H1 (cell line): ENCODE measurements at regions of chr5 and their contacts with region 1.

Region 1: GRCh38 chr5:131589510-131590348 is 45.3 kb downstream of the RAPGEF6 start:
- DNase-seq: peak in 1 of 2 experiments; percentile 56
- H3K4me3 ChIP-seq: no peak overlapping the region
- H3K27ac ChIP-seq: no peak overlapping the region
- H3K4me1 ChIP-seq: no peaks in the 10 kb centered on the region; a peak in 1 of 7 replicates
- H3K27me3 ChIP-seq: no peaks in the 10 kb centered on the region
- CTCF ChIP-seq: peak in 2 of 3 experiments; percentile 63 to 88; a peak in 3 of 4 replicates
- EP300 ChIP-seq: no peak
- POLR2A ChIP-seq: no peak
- RAD21 ChIP-seq: peak; percentile 90 to 91

Region 2: GRCh38 chr5:131548176-131548575 is 41.6 kb before region 1 on chr5:
- CTCF ChIA-PET with region 1: no interaction called
- POLR2A ChIA-PET with region 1: no interaction called
- DNase-seq: no peak
- H3K4me3 ChIP-seq: no peak overlapping the region
- H3K27ac ChIP-seq: no peak overlapping the region
- H3K4me1 ChIP-seq: no peaks in the 10 kb centered on the region
- H3K27me3 ChIP-seq: no peaks in the 10 kb centered on the region
- CTCF ChIP-seq: no peak
- EP300 ChIP-seq: no peak
- POLR2A ChIP-seq: no peak
- RAD21 ChIP-seq: no peak

Region 3: GRCh38 chr5:131634666-131634995 is 44.9 kb after region 1 on chr5:
- CTCF ChIA-PET with region 1: interaction called, 17 read pairs
- POLR2A ChIA-PET with region 1: interaction called, 4 read pairs
- DNase-seq: peak; percentile 46 to 75
- H3K4me3 ChIP-seq: peak overlapping the region; percentile 89 to 99 (median 96)
- H3K27ac ChIP-seq: peak overlapping the region; percentile 93
- H3K4me1 ChIP-seq: peaks cover 0 to 2% (median 0%) of the 10 kb centered on the region in 4 experiments; a peak in 1 of 7 replicates
- H3K27me3 ChIP-seq: no peaks in the 10 kb centered on the region
- CTCF ChIP-seq: no peak
- EP300 ChIP-seq: no peak
- POLR2A ChIP-seq: no peak
- RAD21 ChIP-seq: no peak; a peak in 1 of 4 replicates

Region 4: DNA sequence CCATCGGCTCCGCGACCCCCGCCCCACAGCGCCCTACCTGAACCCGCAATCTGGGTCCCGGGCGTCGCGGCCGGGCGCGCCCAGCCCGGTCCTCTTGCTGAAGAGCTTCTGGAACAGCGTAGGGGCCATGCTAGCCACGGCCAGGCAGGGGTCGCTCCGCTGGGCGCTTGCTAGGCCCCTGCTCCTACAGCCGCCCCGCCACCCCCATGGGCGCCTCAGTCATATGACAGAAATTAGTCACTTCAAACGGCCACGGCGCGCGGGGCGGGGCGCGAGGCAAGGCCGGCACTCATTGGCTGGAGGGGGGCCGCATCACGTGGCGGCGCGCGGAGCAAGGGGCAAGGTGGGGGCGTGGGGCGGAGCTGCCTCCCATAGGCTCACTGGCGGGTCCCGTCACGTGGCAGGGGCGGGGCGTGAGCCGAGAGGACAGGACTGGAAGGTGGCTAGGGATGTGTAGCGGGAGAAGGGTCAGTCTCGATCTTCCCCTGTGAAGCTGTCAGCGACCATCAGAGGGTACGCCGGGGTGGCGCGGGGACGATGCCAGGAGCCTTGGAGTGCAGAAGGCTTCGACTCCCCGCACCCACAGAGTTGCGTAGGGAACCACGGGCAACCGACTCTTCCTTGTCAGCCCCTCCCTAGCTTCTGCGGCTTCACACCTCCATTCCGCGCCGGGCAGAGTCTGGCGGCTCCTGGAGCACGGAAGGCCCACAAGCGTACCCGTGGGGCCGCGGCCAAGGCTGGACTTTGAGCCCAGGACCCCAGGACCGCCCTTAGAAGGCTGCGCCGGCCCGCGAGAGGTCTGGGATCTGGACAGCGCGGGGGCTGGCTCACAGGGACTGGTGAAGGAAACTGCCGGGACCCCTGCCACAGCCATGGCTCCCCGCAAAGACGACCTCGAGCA is 207.3 kb after region 1 on chr5 and contains the start of gene FNIP1:
- CTCF ChIA-PET with region 1: interaction called, 10 read pairs
- POLR2A ChIA-PET with region 1: interaction called, 3 read pairs
- DNase-seq: peak; percentile 88 to 98
- H3K4me3 ChIP-seq: peak within 1 kb of the TSS; percentile 76 to 96 (median 89)
- H3K27ac ChIP-seq: peak within 1 kb of the TSS; percentile 68; the same call in 1 of the 2 replicates
- H3K4me1 ChIP-seq: 0 out of 7 replicates have a peak, but pooled peaks cover 0 to 1% (median 0%) of the 10 kb centered on the region in 4 experiments
- H3K27me3 ChIP-seq: peaks cover 0 to 3% (median 0%) of the 10 kb centered on the region in 4 experiments; a peak in 1 of 7 replicates
- CTCF ChIP-seq: peak in 1 of 3 experiments; percentile 10; a peak in 1 of 4 replicates
- EP300 ChIP-seq: peak in 1 of 2 experiments; percentile 39; a peak in 1 of 3 replicates
- POLR2A ChIP-seq: peak; percentile 72 to 78
- RAD21 ChIP-seq: peak in 1 of 2 experiments; percentile 3; a peak in 1 of 4 replicates
- total RNA-seq, gene FNIP1: 17.1 and 17.3 TPM in 2 replicates

Region 5: GRCh38 chr5:131913603-131914002 is 323.9 kb after region 1 on chr5:
- CTCF ChIA-PET with region 1: no interaction called
- POLR2A ChIA-PET with region 1: no interaction called
- DNase-seq: no peak
- H3K4me3 ChIP-seq: no peak overlapping the region
- H3K27ac ChIP-seq: no peak overlapping the region
- H3K4me1 ChIP-seq: no peaks in the 10 kb centered on the region
- H3K27me3 ChIP-seq: no peaks in the 10 kb centered on the region
- CTCF ChIP-seq: no peak
- EP300 ChIP-seq: no peak
- POLR2A ChIP-seq: no peak
- RAD21 ChIP-seq: no peak

Region 6: GRCh38 chr5:132007399-132008165 is 417.9 kb after region 1 on chr5:
- CTCF ChIA-PET with region 1: interaction called, 82 read pairs
- POLR2A ChIA-PET with region 1: no interaction called
- DNase-seq: peak; percentile 73 to 89
- H3K4me3 ChIP-seq: no peak overlapping the region
- H3K27ac ChIP-seq: no peak overlapping the region
- H3K4me1 ChIP-seq: peaks cover 3 to 29% (median 17%) of the 10 kb centered on the region in 4 experiments
- H3K27me3 ChIP-seq: peaks cover 5 to 26% (median 18%) of the 10 kb centered on the region in 4 experiments
- CTCF ChIP-seq: peak; percentile 45 to 98 (median 86)
- EP300 ChIP-seq: no peak
- POLR2A ChIP-seq: no peak
- RAD21 ChIP-seq: peak; percentile 94 to 97